GM12878 (cell line): ENCODE measurements at regions of chr11 and their contacts with region 1.

Region 1: DNA sequence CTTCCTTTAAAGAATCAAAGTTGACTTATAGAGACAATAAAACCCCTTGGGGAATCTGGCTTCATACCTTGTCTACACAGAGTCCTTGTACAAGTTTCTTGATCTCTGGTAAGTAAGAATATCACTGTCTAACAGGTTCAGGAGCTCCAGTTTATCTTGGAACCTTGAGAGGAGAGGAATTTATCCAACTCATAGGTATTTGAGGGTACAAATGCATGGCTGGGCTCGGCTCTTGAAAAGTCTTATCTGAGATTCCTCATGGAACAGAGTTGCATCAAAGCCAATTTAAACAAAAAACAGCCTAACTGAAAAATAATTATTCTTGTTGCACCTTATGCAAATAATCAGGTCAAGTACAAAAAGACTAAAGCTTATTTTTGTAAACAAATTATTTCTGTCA is 33.4 kb downstream of the CARD18 start:
- DNase-seq: no peak
- ATAC-seq: no peak
- H3K4me3 ChIP-seq: no peak overlapping the region
- H3K27ac ChIP-seq: no peak overlapping the region
- H3K4me1 ChIP-seq: no peaks in the 10 kb centered on the region
- H3K27me3 ChIP-seq: no peaks in the 10 kb centered on the region; a peak in 1 of 4 replicates
- CTCF ChIP-seq: no peak
- EP300 ChIP-seq: no peak
- POLR2A ChIP-seq: no peak
- RAD21 ChIP-seq: no peak

Region 2: DNA sequence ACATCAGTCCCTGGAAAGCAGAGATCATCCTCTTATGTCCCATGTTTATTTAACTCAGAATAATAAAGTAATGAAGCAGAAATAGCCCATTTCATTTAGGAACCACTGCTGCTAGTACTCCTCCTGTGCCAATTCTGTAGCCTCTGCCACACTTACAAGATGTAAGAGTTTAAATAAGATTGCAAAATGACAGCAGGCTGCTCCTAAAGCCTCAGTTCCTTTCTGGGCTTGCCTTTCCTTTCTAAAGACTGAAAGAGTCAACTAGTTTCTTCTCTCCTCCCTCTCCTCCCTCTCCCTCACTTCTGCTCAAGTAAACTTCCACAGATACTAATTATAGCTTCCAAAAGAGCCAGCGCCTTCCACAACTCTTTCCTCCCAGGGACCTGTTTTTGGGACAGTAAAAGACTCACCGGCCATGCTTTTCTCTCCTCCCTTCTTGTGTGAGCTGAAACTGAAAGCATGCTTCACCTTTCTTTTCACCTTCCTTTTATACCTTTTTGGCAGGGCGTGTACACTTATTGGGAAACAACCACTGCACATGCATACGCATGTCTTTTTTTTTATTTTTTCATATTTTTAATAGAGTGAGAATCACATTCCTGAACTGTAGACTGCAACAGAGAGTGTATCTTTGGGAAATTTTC is 34.9 kb before region 1 on chr11:
- CTCF ChIA-PET with region 1: no interaction called
- POLR2A ChIA-PET with region 1: no interaction called
- RAD21 ChIA-PET with region 1: no interaction called
- SMC1A ChIA-PET with region 1: no interaction called
- in situ Hi-C with region 1: no loop called
- intact Hi-C with region 1: loop called (anchors 2 kb)
- DNase-seq: no peak
- ATAC-seq: no peak
- H3K4me3 ChIP-seq: no peak overlapping the region
- H3K27ac ChIP-seq: no peak overlapping the region
- H3K4me1 ChIP-seq: no peaks in the 10 kb centered on the region
- H3K27me3 ChIP-seq: peaks cover 0 to 5% of the 10 kb centered on the region in 2 experiments; a peak in 1 of 4 replicates
- CTCF ChIP-seq: no peak
- EP300 ChIP-seq: no peak
- POLR2A ChIP-seq: no peak
- RAD21 ChIP-seq: no peak